GM12878 (cell line): ENCODE measurements at regions of chr7 and their contacts with region 1.

Region 1: GRCh38 chr7:77467408-77467807 is 51.3 kb upstream of the GSAP start:
- DNase-seq: no peak
- ATAC-seq: peak; percentile 4; the same call in 1 of the 3 replicates
- H3K4me3 ChIP-seq: no peak overlapping the region
- H3K27ac ChIP-seq: no peak overlapping the region
- H3K4me1 ChIP-seq: peaks cover 19% of the 10 kb centered on the region
- H3K27me3 ChIP-seq: no peaks in the 10 kb centered on the region
- CTCF ChIP-seq: no peak
- EP300 ChIP-seq: no peak
- POLR2A ChIP-seq: no peak
- RAD21 ChIP-seq: no peak

Region 2: GRCh38 chr7:77351539-77352004 is 115.8 kb before region 1 on chr7:
- CTCF ChIA-PET with region 1: interaction called, 3 read pairs
- POLR2A ChIA-PET with region 1: interaction called, 3 read pairs
- RAD21 ChIA-PET with region 1: interaction called, 3 read pairs
- SMC1A ChIA-PET with region 1: interaction called, 5 read pairs
- in situ Hi-C with region 1: no loop called
- intact Hi-C with region 1: loop called (anchors 1 kb)
- DNase-seq: peak; percentile 98
- ATAC-seq: peak; percentile 94
- H3K4me3 ChIP-seq: no peak overlapping the region
- H3K27ac ChIP-seq: peak overlapping the region; percentile 61
- H3K4me1 ChIP-seq: peaks cover 23% of the 10 kb centered on the region
- H3K27me3 ChIP-seq: no peaks in the 10 kb centered on the region
- CTCF ChIP-seq: no peak
- EP300 ChIP-seq: peak; percentile 91 to 92; a peak in 3 of 4 replicates
- POLR2A ChIP-seq: peak; percentile 56; the same call in 1 of the 2 replicates
- RAD21 ChIP-seq: 0 out of 2 replicates have a peak, but pooled peaks have one; percentile 1

Region 3: DNA sequence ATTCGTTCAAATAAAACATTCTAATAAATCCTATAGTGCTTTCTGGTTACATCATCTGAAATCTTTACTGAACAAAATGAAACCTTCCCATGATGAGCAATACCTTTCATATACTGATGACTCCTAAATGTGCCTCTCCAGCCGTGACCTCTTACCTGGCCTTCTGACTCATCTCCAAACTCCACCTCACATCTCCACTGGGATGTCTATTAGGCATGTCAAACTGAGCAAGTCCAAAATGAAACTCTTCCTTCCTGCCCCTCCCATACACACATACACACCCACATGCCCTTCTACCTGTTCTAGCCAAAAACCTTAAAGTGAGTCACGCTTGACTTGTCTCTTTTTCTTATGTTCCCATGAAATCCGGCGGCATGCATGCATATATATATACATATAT is 74.1 kb before region 1 on chr7:
- CTCF ChIA-PET with region 1: no interaction called
- POLR2A ChIA-PET with region 1: no interaction called
- RAD21 ChIA-PET with region 1: no interaction called
- SMC1A ChIA-PET with region 1: interaction called, 5 read pairs
- in situ Hi-C with region 1: no loop called
- intact Hi-C with region 1: loop called (anchors 1 kb)
- DNase-seq: peak; percentile 85
- ATAC-seq: peak; percentile 92
- H3K4me3 ChIP-seq: no peak overlapping the region
- H3K27ac ChIP-seq: peak overlapping the region; percentile 72
- H3K4me1 ChIP-seq: peaks cover 30% of the 10 kb centered on the region
- H3K27me3 ChIP-seq: no peaks in the 10 kb centered on the region
- CTCF ChIP-seq: no peak
- EP300 ChIP-seq: peak in 1 of 2 experiments; percentile 70; a peak in 2 of 4 replicates
- POLR2A ChIP-seq: no peak
- RAD21 ChIP-seq: 0 out of 2 replicates have a peak, but pooled peaks have one; percentile 3

Region 4: GRCh38 chr7:77425101-77426051 is 42.0 kb before region 1 on chr7:
- CTCF ChIA-PET with region 1: interaction called, 5 read pairs
- POLR2A ChIA-PET with region 1: interaction called, 5 read pairs
- RAD21 ChIA-PET with region 1: interaction called, 3 read pairs
- SMC1A ChIA-PET with region 1: interaction called, 3 read pairs
- in situ Hi-C with region 1: no loop called
- intact Hi-C with region 1: loop called (anchors 2 kb)
- DNase-seq: no peak
- ATAC-seq: peak; percentile 61
- H3K4me3 ChIP-seq: peak overlapping the region; percentile 54; the same call in 1 of the 2 replicates
- H3K27ac ChIP-seq: peak overlapping the region; percentile 78
- H3K4me1 ChIP-seq: peaks cover 27% of the 10 kb centered on the region
- H3K27me3 ChIP-seq: no peaks in the 10 kb centered on the region
- CTCF ChIP-seq: no peak
- EP300 ChIP-seq: no peak
- POLR2A ChIP-seq: no peak
- RAD21 ChIP-seq: no peak

Region 5: GRCh38 chr7:77455324-77455723 is 12.1 kb before region 1 on chr7:
- CTCF ChIA-PET with region 1: interaction called, 5 read pairs
- POLR2A ChIA-PET with region 1: no interaction called
- RAD21 ChIA-PET with region 1: interaction called, 3 read pairs
- SMC1A ChIA-PET with region 1: interaction called, 11 read pairs
- in situ Hi-C with region 1: no loop called
- intact Hi-C with region 1: no loop called
- DNase-seq: no peak
- ATAC-seq: no peak
- H3K4me3 ChIP-seq: no peak overlapping the region
- H3K27ac ChIP-seq: no peak overlapping the region
- H3K4me1 ChIP-seq: 0 out of 2 replicates have a peak, but pooled peaks cover 3% of the 10 kb centered on the region
- H3K27me3 ChIP-seq: no peaks in the 10 kb centered on the region
- CTCF ChIP-seq: no peak
- EP300 ChIP-seq: no peak
- POLR2A ChIP-seq: no peak
- RAD21 ChIP-seq: no peak

Region 6: GRCh38 chr7:77550586-77550985 is 83.2 kb after region 1 on chr7:
- CTCF ChIA-PET with region 1: no interaction called
- POLR2A ChIA-PET with region 1: no interaction called
- RAD21 ChIA-PET with region 1: no interaction called
- SMC1A ChIA-PET with region 1: interaction called, 10 read pairs
- in situ Hi-C with region 1: no loop called
- intact Hi-C with region 1: no loop called
- DNase-seq: no peak
- ATAC-seq: no peak
- H3K4me3 ChIP-seq: no peak overlapping the region
- H3K27ac ChIP-seq: no peak overlapping the region
- H3K4me1 ChIP-seq: no peaks in the 10 kb centered on the region; the same call in 1 of the 2 replicates
- H3K27me3 ChIP-seq: no peaks in the 10 kb centered on the region
- CTCF ChIP-seq: no peak
- EP300 ChIP-seq: no peak
- POLR2A ChIP-seq: no peak
- RAD21 ChIP-seq: no peak